ENCODE measurements at regions of chr13 and their contacts with region 1.

Region 1: DNA sequence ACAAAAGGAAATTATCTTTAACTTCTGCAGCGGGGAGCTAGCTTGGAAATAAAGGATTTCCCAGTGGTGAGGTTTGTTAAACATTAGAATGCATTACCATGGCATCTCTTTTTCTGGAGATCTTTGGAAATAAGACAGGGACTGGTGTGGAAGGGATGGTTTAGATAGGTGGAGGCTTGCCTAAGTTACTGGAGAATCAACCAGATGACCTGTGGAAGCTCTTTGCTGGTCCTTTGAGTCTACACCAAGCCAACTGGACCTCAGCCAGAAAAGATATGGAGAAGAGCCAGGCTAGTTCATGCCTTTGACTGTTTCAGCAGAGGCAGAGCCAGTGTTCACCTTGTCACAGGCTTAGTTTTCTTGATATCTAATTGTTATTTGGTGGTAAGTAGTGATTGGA is 134.7 kb downstream of the KCNRG start:
- DNase-seq: no peak
- ATAC-seq: peak; percentile 75

Region 2: DNA sequence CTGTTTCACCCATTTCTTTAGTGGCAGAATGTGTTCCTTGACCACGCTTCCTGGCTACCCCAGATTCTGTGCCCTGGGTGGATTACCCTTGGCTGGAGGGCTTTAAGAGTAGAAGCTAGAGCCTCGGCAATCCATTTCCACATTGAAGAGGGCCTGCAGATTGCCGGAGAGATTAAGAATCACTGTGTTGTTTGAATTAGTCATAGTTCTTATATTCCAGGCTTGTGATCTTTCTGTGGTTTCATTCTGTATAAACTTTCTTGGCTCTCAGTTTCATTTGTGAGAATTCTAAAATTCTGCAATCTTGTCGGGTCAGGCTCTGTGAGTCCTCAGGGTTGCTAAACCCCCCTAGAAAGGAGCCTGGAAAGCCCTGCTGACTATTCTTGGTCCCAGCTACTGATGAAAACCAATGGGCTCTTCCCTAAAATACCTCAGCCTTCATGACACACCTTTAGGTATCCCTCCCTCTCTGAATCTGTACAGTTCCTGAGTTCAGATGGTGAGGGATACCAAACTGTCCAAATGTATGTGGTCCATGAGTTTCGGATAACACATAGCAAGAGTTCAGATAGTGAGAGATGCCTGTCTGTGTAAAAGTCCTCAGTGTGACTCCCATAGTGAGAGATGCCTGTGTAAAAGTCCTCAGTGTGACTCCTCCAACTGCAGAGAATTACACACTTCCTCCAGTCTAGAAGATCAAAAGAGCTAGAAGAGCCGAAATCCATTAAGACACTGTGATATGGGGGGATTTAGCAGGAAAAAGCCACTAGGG is 649.9 kb before region 1 on chr13:
- intact Hi-C with region 1: loop called (anchors 5 kb)
- DNase-seq: no peak
- ATAC-seq: no peak

Measured in sciatic nerve (tissue), 2 donors.